Left lung (tissue), 14 donors: ENCODE measurements at regions of chr10 and their contacts with region 1.

Region 1: GRCh38 chr10:101830322-101831168 is 12.3 kb upstream of the OGA start:
- DNase-seq: peak; percentile 87 to 96 (median 93)
- ATAC-seq: peak; percentile 90
- H3K4me3 ChIP-seq: peak overlapping the region; percentile 43 to 63
- H3K27ac ChIP-seq: peak overlapping the region; percentile 53 to 63
- H3K4me1 ChIP-seq: peaks cover 9 to 43% of the 10 kb centered on the region in 2 donors
- H3K27me3 ChIP-seq: no peaks in the 10 kb centered on the region
- CTCF ChIP-seq: no peak

Region 2: GRCh38 chr10:100872034-100872791 is 958.3 kb before region 1 on chr10:
- intact Hi-C with region 1: no loop called
- DNase-seq: peak in 1 of 4 donors; percentile 18
- ATAC-seq: peak; percentile 50
- H3K4me3 ChIP-seq: no peak overlapping the region
- H3K27ac ChIP-seq: no peak overlapping the region
- H3K4me1 ChIP-seq: no peaks in the 10 kb centered on the region
- H3K27me3 ChIP-seq: peaks cover 0 to 55% of the 10 kb centered on the region in 2 donors
- CTCF ChIP-seq: peak; percentile 28 to 37

Region 3: DNA sequence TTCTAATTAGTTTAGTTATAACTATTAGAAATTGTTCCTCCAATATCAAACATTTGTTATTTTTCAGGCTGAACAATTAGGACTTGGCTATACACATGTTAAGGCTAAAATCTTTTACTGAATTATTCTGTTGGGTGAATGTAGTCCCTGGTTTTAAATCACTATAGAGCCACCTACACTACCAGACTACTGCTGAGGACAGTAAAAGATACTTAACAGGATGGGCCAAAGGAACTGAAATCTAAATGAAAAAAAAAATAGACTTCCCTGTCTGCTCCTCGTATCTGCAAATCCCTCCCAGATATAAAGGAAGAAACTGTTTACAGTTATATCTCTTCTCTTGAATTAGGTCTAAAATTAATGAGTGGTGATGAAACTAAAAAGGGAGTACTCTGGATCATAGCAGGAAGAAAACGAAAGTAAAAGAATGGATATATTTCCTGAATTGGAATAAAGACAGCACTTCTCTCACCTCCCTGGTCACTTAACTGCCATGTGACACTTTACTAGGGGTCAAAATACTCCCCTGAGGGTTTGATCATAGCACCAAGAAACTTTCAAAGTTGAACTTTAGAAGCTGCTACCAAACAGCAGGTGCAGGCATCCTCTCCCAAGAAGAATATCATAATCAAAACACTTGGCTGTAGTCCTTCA is 148.2 kb before region 1 on chr10:
- intact Hi-C with region 1: no loop called
- DNase-seq: no peak
- ATAC-seq: peak; percentile 69
- H3K4me3 ChIP-seq: no peak overlapping the region
- H3K27ac ChIP-seq: peak overlapping the region in 1 of 2 donors; percentile 37
- H3K4me1 ChIP-seq: peaks cover 9 to 29% of the 10 kb centered on the region in 2 donors
- H3K27me3 ChIP-seq: no peaks in the 10 kb centered on the region
- CTCF ChIP-seq: no peak

Region 4: GRCh38 chr10:102072673-102073527 is 242.4 kb after region 1 on chr10:
- intact Hi-C with region 1: loop called in 1 of 2 experiments (anchors 10 kb)
- DNase-seq: peak in 3 of 4 donors; percentile 67 to 76 (median 74)
- ATAC-seq: peak; percentile 99
- H3K4me3 ChIP-seq: no peak overlapping the region
- H3K27ac ChIP-seq: no peak overlapping the region
- H3K4me1 ChIP-seq: peaks cover 3 to 21% of the 10 kb centered on the region in 2 donors
- H3K27me3 ChIP-seq: no peaks in the 10 kb centered on the region
- CTCF ChIP-seq: peak; percentile 89 to 97